PC-3 (cell line): ENCODE measurements at regions of chr2 and their contacts with region 1.

Region 1: DNA sequence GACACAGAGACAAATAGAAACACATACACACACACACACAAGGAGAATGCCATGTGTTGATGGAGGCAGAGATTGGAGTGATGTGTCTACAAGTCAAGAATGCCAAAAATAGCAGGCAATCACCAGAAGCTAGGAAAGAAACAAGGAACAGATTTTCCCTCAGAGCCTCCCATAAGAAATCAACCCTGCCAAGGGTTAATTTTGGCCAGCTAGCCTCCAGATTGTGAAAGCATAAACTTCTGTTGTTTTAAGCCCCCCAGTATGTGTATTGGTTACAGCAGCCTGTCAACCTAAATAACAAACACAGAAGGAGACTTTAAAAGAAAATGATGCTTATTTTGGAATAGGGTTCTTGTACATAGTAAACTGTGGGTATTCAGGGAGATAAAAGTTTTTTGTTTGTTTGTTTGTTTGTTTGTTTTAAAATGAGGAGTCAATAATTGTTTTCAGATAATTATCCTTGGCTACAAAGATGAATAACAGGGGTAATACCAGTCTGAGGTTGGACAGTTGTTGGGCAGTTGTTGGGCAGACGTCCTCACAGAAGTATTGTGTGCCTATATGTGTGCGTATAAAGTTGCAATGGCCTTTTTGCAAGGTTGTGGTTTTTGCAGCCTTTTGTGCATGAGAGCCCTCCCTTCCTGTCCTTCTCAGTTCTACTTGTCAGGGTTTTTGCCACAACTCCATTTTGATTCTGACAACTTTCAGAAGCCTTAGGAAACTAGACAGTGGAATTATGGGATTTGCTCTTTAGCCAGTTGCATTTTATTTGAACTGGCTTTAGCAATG is 5.8 kb upstream of the STK39 start:
- DNase-seq: no peak
- ATAC-seq: no peak
- H3K4me3 ChIP-seq: no peak overlapping the region
- H3K27ac ChIP-seq: no peak overlapping the region
- H3K4me1 ChIP-seq: peaks cover 12% of the 10 kb centered on the region
- H3K27me3 ChIP-seq: no peaks in the 10 kb centered on the region
- CTCF ChIP-seq: no peak

Region 2: GRCh38 chr2:168231609-168232241 is 21.4 kb before region 1 on chr2:
- CTCF ChIA-PET with region 1: no interaction called
- POLR2A ChIA-PET with region 1: no interaction called
- intact Hi-C with region 1: no loop called
- DNase-seq: no peak
- ATAC-seq: no peak
- H3K4me3 ChIP-seq: no peak overlapping the region
- H3K27ac ChIP-seq: no peak overlapping the region
- H3K4me1 ChIP-seq: peaks cover 8% of the 10 kb centered on the region; the same call in 1 of the 2 replicates
- H3K27me3 ChIP-seq: no peaks in the 10 kb centered on the region
- CTCF ChIP-seq: no peak

Region 3: GRCh38 chr2:168278424-168278888 is 25.3 kb after region 1 on chr2:
- CTCF ChIA-PET with region 1: no interaction called
- POLR2A ChIA-PET with region 1: no interaction called
- intact Hi-C with region 1: loop called (anchors 2 kb)
- DNase-seq: peak; percentile 70
- ATAC-seq: peak; percentile 90
- H3K4me3 ChIP-seq: no peak overlapping the region
- H3K27ac ChIP-seq: no peak overlapping the region; the same call in 1 of the 2 replicates
- H3K4me1 ChIP-seq: peaks cover 14% of the 10 kb centered on the region
- H3K27me3 ChIP-seq: no peaks in the 10 kb centered on the region
- CTCF ChIP-seq: no peak

Region 4: DNA sequence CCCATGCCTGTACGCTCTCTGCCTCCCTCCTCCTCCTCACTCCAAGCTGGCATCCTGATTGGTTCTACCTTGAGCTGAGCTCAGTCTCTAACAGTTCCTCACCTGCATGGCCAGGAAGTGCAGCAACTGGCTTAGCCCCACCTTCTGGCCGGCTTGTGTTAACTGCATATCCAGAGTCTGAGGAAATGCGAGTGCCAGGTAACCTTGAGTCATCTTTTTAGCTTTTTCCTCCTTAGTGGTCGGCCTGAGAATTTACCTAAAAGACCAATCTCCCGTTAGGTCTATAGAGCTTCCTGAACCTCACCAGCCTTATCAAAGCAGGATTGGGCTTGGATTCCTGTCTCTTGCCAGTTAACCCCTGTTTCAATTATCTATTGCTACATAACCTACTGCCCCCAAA is 83.7 kb after region 1 on chr2:
- CTCF ChIA-PET with region 1: interaction called, 4 read pairs
- POLR2A ChIA-PET with region 1: no interaction called
- intact Hi-C with region 1: loop called (anchors 2 kb)
- DNase-seq: peak; percentile 92
- ATAC-seq: peak; percentile 96
- H3K4me3 ChIP-seq: no peak overlapping the region
- H3K27ac ChIP-seq: no peak overlapping the region
- H3K4me1 ChIP-seq: peaks cover 4% of the 10 kb centered on the region
- H3K27me3 ChIP-seq: no peaks in the 10 kb centered on the region
- CTCF ChIP-seq: peak; percentile 89